Sciatic nerve (tissue), 2 donors: ENCODE measurements at regions of chr6 and their contacts with region 1.

Region 1: DNA sequence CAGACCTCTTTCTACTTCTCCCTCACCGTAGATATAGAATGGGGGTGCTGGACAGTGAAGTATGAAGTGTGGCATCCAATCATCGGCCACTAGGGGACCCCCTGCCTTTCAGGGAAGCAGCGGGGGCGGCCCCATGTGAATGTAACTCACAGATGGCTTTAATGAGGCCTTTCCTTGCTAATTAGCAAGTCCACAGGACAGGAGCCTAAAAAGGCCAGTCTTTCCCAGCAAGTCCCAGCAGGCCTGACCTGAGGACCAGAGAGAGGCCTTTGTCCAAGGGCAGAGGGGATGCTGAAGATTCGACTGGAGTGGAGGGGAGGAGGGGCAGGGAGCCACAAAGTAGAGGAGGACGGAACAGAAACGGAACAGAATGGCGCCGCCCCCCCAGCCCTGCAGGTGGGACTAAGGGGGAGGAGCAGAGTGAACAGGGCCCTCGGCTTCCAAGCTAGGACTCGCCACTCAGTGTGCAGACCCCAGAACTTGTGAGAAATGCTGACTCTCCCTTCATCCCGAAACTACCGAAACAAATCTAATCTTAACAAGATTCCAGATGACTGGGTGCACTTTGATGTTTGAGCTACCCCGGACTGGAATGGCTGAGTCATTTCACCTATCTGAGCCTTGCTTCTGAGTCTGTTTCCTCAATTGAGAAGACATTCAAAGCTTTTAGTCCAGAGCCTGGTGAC is 5.8 kb downstream of the C6orf132 start:
- DNase-seq: no peak
- ATAC-seq: no peak

Region 2: GRCh38 chr6:42099340-42100028 is 37.2 kb before region 1 on chr6:
- intact Hi-C with region 1: loop called (anchors 2 kb)
- DNase-seq: no peak
- ATAC-seq: peak; percentile 12